ENCODE measurements at regions of chr20 and their contacts with region 1.

Region 1: GRCh38 chr20:53939572-53940359 is 130.6 kb downstream of the BCAS1 start:
- DNase-seq: peak; percentile 35 to 62 (median 48)
- ATAC-seq: peak; percentile 82
- H3K4me3 ChIP-seq: no peak overlapping the region
- H3K4me3 Mint-ChIP-seq: peak overlapping the region in 3 of 10 donors; percentile 24 to 44 (median 30)
- H3K27ac ChIP-seq: no peak overlapping the region
- H3K27ac Mint-ChIP-seq: peak overlapping the region in 6 of 9 donors; percentile 2 to 79 (median 22)
- H3K4me1 ChIP-seq: peaks cover 15 to 24% of the 10 kb centered on the region in 2 donors
- H3K4me1 Mint-ChIP-seq: peaks cover 26 to 62% (median 44%) of the 10 kb centered on the region in 7 donors
- H3K27me3 ChIP-seq: no peaks in the 10 kb centered on the region
- H3K27me3 Mint-ChIP-seq: no peaks in the 10 kb centered on the region

Region 2: GRCh38 chr20:53692413-53693067 is 247.2 kb before region 1 on chr20:
- CTCF ChIA-PET with region 1: no interaction called
- POLR2A ChIA-PET with region 1: interaction called, 11 read pairs
- intact Hi-C with region 1: no loop called
- DNase-seq: no peak
- ATAC-seq: peak; percentile 61
- H3K4me3 ChIP-seq: no peak overlapping the region
- H3K4me3 Mint-ChIP-seq: peak overlapping the region; percentile 42 to 80 (median 72)
- H3K27ac ChIP-seq: no peak overlapping the region
- H3K27ac Mint-ChIP-seq: peak overlapping the region; percentile 38 to 92 (median 69)
- H3K4me1 ChIP-seq: peaks cover 8 to 10% of the 10 kb centered on the region in 2 donors
- H3K4me1 Mint-ChIP-seq: peaks cover 8 to 45% (median 30%) of the 10 kb centered on the region in 7 donors
- H3K27me3 ChIP-seq: no peaks in the 10 kb centered on the region
- H3K27me3 Mint-ChIP-seq: no peaks in the 10 kb centered on the region

Region 3: GRCh38 chr20:53828682-53829254 is 111.0 kb before region 1 on chr20:
- CTCF ChIA-PET with region 1: no interaction called
- POLR2A ChIA-PET with region 1: no interaction called
- intact Hi-C with region 1: no loop called
- DNase-seq: no peak
- ATAC-seq: no peak
- H3K4me3 ChIP-seq: peak overlapping the region; percentile 52
- H3K4me3 Mint-ChIP-seq: peak overlapping the region; percentile 77 to 96 (median 88)
- H3K27ac ChIP-seq: peak overlapping the region; percentile 59
- H3K27ac Mint-ChIP-seq: peak overlapping the region; percentile 86 to 98 (median 94)
- H3K4me1 ChIP-seq: peaks cover 16 to 26% of the 10 kb centered on the region in 2 donors
- H3K4me1 Mint-ChIP-seq: peaks cover 24 to 62% (median 50%) of the 10 kb centered on the region in 7 donors
- H3K27me3 ChIP-seq: no peaks in the 10 kb centered on the region
- H3K27me3 Mint-ChIP-seq: no peaks in the 10 kb centered on the region

Region 4: GRCh38 chr20:54062812-54063280 is 123.1 kb after region 1 on chr20:
- CTCF ChIA-PET with region 1: no interaction called
- POLR2A ChIA-PET with region 1: no interaction called
- intact Hi-C with region 1: loop called in 1 of 2 experiments (anchors 1 kb)
- DNase-seq: peak in 6 of 9 donors; percentile 8 to 40 (median 26)
- ATAC-seq: peak; percentile 61
- H3K4me3 ChIP-seq: no peak overlapping the region
- H3K4me3 Mint-ChIP-seq: no peak overlapping the region
- H3K27ac ChIP-seq: no peak overlapping the region
- H3K27ac Mint-ChIP-seq: no peak overlapping the region
- H3K4me1 ChIP-seq: peaks cover 0 to 9% of the 10 kb centered on the region in 2 donors
- H3K4me1 Mint-ChIP-seq: peaks cover 0 to 11% (median 7%) of the 10 kb centered on the region in 7 donors
- H3K27me3 ChIP-seq: no peaks in the 10 kb centered on the region
- H3K27me3 Mint-ChIP-seq: no peaks in the 10 kb centered on the region

Measured in naive thymus-derived CD4-positive, alpha-beta T cell (primary cell).